ENCODE measurements at regions of chr13 and their contacts with region 1.

Region 1: DNA sequence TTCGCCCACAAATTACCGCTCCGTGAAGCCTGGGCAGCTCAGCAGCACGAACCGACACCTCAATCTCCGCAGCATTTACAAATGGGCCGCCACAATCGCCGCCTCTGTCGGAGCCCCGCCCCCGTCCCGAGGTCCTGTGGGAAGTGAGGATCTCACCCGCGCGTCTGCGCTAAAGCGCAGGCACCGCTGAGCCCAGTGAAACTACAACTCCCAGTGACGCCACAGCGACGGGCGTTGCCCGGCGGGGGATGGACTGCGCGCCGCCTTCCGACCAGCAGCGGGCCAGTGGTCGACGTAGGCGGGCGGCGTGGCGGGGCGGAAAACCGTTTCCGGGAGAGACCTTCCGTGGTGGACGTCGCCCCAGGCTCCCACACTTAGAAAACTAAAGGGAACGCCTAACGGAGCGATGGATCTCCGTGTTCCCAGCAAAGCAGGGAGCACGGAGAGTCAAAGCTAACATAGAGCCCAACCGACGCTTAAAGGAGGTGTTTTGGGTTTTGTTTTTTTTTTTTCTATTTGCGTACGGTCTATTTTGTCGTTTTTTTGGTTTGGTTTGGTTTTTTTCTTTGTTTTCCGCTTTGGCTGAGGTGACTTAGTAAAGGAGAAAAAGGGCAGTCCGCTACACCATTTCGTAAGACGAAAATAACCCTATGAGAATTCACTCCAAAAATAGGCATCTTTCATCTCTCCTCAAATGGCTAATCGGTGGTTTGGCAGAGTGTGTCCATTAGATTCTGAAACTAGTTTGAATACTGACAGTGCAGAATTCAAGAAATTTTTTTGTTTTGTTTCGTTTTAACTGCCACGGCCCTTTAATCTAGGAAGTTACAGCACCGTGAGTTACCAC is 159.0 kb downstream of the RNF17 start:
- DNase-seq: peak; percentile 96
- ATAC-seq: peak; percentile 100
- H3K4me3 Mint-ChIP-seq: peak overlapping the region; percentile 97
- H3K27ac Mint-ChIP-seq: peak overlapping the region; percentile 94
- H3K4me1 Mint-ChIP-seq: peaks cover 9% of the 10 kb centered on the region
- H3K27me3 Mint-ChIP-seq: peaks cover 2% of the 10 kb centered on the region

Region 2: GRCh38 chr13:24254146-24254841 is 668.7 kb before region 1 on chr13:
- CTCF ChIA-PET with region 1: no interaction called
- POLR2A ChIA-PET with region 1: no interaction called
- intact Hi-C with region 1: loop called in 1 of 2 experiments (anchors 5 kb)
- DNase-seq: peak; percentile 76
- ATAC-seq: peak; percentile 61
- H3K4me3 Mint-ChIP-seq: peak overlapping the region; percentile 95
- H3K27ac Mint-ChIP-seq: peak overlapping the region; percentile 96
- H3K4me1 Mint-ChIP-seq: peaks cover 88% of the 10 kb centered on the region
- H3K27me3 Mint-ChIP-seq: no peaks in the 10 kb centered on the region

Region 3: DNA sequence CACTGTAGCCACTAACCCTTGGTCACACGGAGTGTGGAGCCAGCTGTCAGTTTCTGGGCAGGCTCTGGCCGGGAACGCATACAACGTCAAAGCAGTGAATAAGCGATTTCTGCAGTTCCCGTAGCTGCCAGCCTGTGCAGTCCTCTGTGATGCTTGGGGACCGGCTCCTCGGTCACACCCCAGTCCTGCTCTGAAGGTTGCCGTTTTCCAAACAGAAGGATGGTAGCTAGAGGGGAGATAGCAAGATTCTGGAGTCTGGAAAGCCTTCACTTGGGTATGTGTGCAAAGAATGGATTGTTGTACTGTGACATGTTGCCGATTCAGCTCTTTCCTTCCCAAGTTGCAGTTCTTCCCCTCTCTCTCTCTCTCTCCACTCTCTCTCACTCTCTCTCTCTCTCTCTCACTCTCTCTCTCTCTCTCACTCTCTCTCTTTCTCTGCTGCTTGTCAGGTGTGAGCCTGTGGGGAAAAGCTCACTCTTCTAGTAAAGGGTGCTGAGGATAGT is 652.3 kb before region 1 on chr13:
- CTCF ChIA-PET with region 1: no interaction called
- POLR2A ChIA-PET with region 1: no interaction called
- intact Hi-C with region 1: loop called in 1 of 2 experiments (anchors 5 kb)
- DNase-seq: peak; percentile 80
- ATAC-seq: peak; percentile 37
- H3K4me3 Mint-ChIP-seq: peak overlapping the region; percentile 87
- H3K27ac Mint-ChIP-seq: peak overlapping the region; percentile 97
- H3K4me1 Mint-ChIP-seq: peaks cover 85% of the 10 kb centered on the region
- H3K27me3 Mint-ChIP-seq: no peaks in the 10 kb centered on the region

Region 4: DNA sequence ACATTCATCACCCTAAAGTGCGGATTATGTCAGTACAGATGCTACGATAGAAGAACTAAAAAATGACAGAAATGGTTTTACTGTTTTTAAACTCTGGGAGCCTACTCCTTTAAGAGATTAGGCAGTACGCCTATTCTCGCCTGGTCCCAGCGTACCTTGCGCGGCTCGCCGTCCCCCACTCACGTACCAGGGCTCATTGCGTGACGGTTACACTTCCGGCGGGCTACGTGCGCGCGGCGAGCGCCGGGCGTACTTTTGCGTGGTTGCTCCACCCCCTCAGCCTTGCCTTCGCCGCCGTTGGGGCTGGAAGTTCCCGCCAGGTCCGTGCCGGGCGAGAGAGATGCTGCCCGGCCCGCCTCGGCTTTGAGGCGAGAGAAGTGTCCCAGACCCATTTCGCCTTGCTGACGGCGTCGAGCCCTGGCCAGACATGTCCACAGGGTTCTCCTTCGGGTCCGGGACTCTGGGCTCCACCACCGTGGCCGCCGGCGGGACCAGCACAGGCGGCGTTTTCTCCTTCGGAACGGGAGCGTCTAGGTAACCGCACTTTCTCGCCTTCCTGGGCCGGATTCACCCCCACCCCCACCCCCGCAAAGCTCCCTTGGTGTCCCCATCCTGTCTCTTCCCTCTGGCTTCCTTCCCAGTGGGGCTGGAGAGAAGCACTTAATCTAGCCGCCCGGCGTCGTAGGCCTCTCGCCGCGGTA is 378.5 kb after region 1 on chr13 and contains the start of gene NUP58:
- CTCF ChIA-PET with region 1: no interaction called
- POLR2A ChIA-PET with region 1: no interaction called
- intact Hi-C with region 1: loop called (anchors 1 to 2 kb)
- DNase-seq: peak; percentile 97
- ATAC-seq: peak; percentile 98
- H3K4me3 Mint-ChIP-seq: peak within 1 kb of the TSS; percentile 94
- H3K27ac Mint-ChIP-seq: peak within 1 kb of the TSS; percentile 95
- H3K4me1 Mint-ChIP-seq: peaks cover 30% of the 10 kb centered on the region
- H3K27me3 Mint-ChIP-seq: peaks cover 4% of the 10 kb centered on the region
- total RNA-seq, gene NUP58: 134 to 137 TPM

Region 5: GRCh38 chr13:25440061-25440460 is 517.1 kb after region 1 on chr13:
- CTCF ChIA-PET with region 1: no interaction called
- POLR2A ChIA-PET with region 1: no interaction called
- intact Hi-C with region 1: no loop called
- DNase-seq: no peak
- ATAC-seq: no peak
- H3K4me3 Mint-ChIP-seq: no peak overlapping the region
- H3K27ac Mint-ChIP-seq: no peak overlapping the region
- H3K4me1 Mint-ChIP-seq: no peaks in the 10 kb centered on the region
- H3K27me3 Mint-ChIP-seq: peaks cover 32% of the 10 kb centered on the region

Region 6: DNA sequence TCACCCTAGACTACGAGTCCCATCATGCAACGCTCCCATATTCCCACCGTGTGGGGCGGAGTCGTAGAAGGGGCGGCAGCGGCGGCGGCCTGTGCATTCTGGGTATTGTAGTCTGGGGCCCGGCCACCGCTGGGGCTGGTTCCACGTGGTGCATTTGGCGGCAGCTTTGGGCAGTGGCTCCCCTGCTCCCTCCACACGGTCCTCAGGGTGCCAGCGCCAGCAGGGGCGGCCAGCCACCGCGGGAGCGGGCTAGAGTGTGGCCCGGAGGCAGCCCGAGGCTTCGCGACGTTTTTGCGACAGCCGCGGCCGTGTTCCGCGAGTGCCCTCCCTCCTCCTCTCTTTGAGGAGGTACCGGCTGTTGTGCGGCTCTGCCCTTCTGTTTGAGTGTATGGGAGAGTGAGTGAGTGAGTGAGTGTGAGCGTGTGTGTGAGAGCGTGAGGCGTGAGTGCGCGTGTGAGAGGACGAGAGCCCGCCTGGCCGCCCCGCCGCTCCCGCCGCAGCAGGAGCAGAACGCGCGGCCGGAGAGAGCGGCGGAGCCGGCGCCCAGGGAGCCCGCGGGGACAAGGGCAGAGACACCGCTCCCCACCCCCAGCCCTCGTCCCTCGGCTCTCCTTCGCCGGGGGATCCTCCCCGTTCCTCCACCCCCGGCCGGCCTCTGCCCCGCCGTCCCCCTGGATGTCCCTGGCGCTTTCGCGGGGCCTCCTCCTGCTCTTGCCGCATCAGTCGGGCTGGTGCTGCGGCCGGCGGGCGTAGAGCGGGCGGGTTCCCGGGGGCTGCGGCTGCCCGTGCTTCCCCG is 1331.0 kb after region 1 on chr13 and contains the start of gene CDK8:
- CTCF ChIA-PET with region 1: no interaction called
- POLR2A ChIA-PET with region 1: no interaction called
- intact Hi-C with region 1: loop called in 1 of 2 experiments (anchors 10 kb)
- DNase-seq: peak; percentile 93
- ATAC-seq: peak; percentile 93
- H3K4me3 Mint-ChIP-seq: peak within 1 kb of the TSS; percentile 82
- H3K27ac Mint-ChIP-seq: peak within 1 kb of the TSS; percentile 84
- H3K4me1 Mint-ChIP-seq: peaks cover 38% of the 10 kb centered on the region
- H3K27me3 Mint-ChIP-seq: no peaks in the 10 kb centered on the region
- total RNA-seq, gene CDK8: 17.4 to 24.3 TPM